ENCODE measurements at regions of chr9 and their contacts with region 1.

Region 1: DNA sequence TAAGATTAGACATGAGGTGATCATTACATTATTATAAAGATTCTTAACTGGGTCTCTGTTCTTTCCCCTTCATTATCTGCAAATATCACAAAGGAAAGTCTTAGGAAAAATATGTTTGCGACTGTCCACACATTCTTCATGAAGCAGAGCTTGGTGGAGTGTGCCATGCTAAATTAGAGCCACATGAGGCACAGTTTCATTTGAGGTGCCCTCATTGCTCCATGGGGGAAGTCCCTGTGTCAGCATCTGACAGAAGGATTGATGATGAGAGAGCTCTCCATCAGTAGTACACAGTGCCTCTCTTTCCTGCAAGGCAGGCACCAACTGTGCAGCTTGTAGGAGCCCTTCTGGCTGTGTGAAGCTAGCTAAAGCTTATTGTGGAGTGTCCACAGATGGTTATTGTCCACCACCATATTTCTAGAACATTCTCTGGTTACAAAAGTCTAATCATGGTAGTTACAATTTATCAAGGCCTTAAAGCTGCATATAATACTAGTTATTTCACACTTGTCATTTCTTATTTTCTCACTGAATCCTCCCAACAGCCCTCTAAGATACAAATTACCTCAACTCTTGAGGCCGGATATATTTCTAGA is 63.9 kb downstream of the C9orf152 start:
- DNase-seq: no peak
- ATAC-seq: peak; percentile 79
- H3K4me3 ChIP-seq: peak overlapping the region; percentile 37; the same call in 1 of the 2 replicates
- H3K27ac ChIP-seq: peak overlapping the region; percentile 81
- H3K4me1 ChIP-seq: peaks cover 61% of the 10 kb centered on the region
- H3K27me3 ChIP-seq: no peaks in the 10 kb centered on the region
- CTCF ChIP-seq: peak in 2 of 3 experiments; percentile 16 to 21; a peak in 1 of 6 replicates
- EP300 ChIP-seq: no peak
- POLR2A ChIP-seq: peak; percentile 48; the same call in 1 of the 2 replicates
- RAD21 ChIP-seq: no peak

Region 2: GRCh38 chr9:109705515-109705914 is 438.5 kb before region 1 on chr9:
- CTCF ChIA-PET with region 1: no interaction called
- POLR2A ChIA-PET with region 1: no interaction called
- RAD21 ChIA-PET with region 1: no interaction called
- SMC1A ChIA-PET with region 1: no interaction called
- in situ Hi-C with region 1: no loop called
- intact Hi-C with region 1: no loop called
- DNase-seq: no peak
- ATAC-seq: no peak
- H3K4me3 ChIP-seq: no peak overlapping the region
- H3K27ac ChIP-seq: no peak overlapping the region
- H3K4me1 ChIP-seq: no peaks in the 10 kb centered on the region
- H3K27me3 ChIP-seq: no peaks in the 10 kb centered on the region
- CTCF ChIP-seq: no peak
- EP300 ChIP-seq: no peak
- POLR2A ChIP-seq: no peak
- RAD21 ChIP-seq: no peak

Region 3: GRCh38 chr9:110048403-110048975 is 95.6 kb before region 1 on chr9:
- CTCF ChIA-PET with region 1: interaction called, 53 read pairs
- POLR2A ChIA-PET with region 1: interaction called, 33 read pairs
- RAD21 ChIA-PET with region 1: interaction called, 84 read pairs
- SMC1A ChIA-PET with region 1: interaction called, 78 read pairs
- in situ Hi-C with region 1: no loop called
- intact Hi-C with region 1: loop called (anchors 2 kb)
- DNase-seq: peak; percentile 56
- ATAC-seq: peak; percentile 90
- H3K4me3 ChIP-seq: peak overlapping the region; percentile 100
- H3K27ac ChIP-seq: peak overlapping the region; percentile 87
- H3K4me1 ChIP-seq: 0 out of 2 replicates have a peak, but pooled peaks cover 4% of the 10 kb centered on the region
- H3K27me3 ChIP-seq: no peaks in the 10 kb centered on the region; a peak in 1 of 4 replicates
- CTCF ChIP-seq: no peak
- EP300 ChIP-seq: no peak
- POLR2A ChIP-seq: peak; percentile 88
- RAD21 ChIP-seq: no peak

Region 4: DNA sequence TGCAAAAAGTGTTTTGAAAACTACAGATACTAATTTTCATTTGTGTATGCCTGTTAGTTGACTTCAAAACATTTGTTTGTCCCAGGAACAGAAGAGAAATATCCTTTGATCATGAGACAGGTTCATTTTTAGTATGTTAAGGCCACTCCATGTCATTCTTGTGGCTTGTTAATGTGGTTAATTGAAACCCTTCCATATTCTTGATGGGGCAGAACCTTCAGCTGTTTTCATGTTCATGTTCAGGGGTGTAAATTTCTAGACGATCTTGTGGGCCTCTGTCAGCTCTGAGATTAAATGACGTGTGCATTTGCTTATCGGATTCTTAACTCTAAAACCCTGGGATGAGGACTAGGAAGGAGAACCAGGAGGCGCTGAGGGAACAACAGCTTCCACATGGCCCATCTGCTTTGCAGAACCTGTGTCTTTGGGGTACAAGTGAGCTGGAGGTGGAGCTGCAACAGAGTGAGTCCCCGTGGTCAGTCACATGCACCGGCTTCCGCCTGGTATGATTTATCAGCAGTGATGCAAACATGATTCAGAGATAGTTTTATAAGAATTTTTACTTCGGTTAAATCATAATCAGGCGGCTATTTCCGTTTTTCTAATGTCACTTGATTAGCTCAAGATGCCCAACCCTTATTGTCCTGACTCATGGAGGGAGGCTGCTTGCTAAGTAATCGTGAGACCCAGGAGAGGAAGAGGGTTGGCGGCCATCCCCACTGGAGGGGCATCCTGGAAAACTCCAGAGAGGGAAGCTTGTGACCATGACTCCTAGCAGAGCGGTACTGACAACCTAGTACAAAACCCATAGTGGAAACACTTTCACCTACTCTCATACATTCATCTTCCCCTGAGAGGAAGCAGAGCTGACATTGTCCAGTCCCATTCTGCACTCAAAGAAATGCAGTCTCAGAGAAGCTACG is 74.5 kb before region 1 on chr9:
- CTCF ChIA-PET with region 1: interaction called, 237 read pairs
- POLR2A ChIA-PET with region 1: interaction called, 11 read pairs
- RAD21 ChIA-PET with region 1: interaction called, 8 read pairs
- SMC1A ChIA-PET with region 1: interaction called, 16 read pairs
- in situ Hi-C with region 1: no loop called
- intact Hi-C with region 1: no loop called
- DNase-seq: no peak
- ATAC-seq: no peak
- H3K4me3 ChIP-seq: no peak overlapping the region
- H3K27ac ChIP-seq: no peak overlapping the region
- H3K4me1 ChIP-seq: peaks cover 29% of the 10 kb centered on the region
- H3K27me3 ChIP-seq: no peaks in the 10 kb centered on the region
- CTCF ChIP-seq: no peak
- EP300 ChIP-seq: no peak
- POLR2A ChIP-seq: no peak
- RAD21 ChIP-seq: no peak

Region 5: DNA sequence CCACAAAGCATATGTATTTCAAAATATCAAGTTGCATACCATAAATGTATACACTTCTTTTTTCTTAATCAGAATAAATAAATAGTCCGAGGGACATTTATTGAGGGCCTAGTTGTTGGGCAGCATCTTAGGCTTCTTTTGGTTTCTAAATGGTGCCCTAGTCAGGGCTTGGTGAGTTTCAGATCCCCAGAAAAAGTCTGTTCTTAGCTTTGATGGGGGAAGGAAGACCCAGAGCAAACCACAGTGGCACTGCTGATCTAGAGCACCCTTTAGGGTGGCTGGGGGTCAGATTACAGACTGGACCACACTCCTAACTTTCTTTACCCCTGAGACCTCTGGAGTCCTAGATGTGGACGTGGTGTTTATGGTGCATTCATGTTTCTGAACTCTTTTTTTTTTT is 33.9 kb before region 1 on chr9:
- CTCF ChIA-PET with region 1: interaction called, 25 read pairs
- POLR2A ChIA-PET with region 1: interaction called, 18 read pairs
- RAD21 ChIA-PET with region 1: interaction called, 282 read pairs
- SMC1A ChIA-PET with region 1: interaction called, 122 read pairs
- in situ Hi-C with region 1: no loop called
- intact Hi-C with region 1: no loop called
- DNase-seq: peak; percentile 51
- ATAC-seq: peak; percentile 96
- H3K4me3 ChIP-seq: no peak overlapping the region
- H3K27ac ChIP-seq: no peak overlapping the region
- H3K4me1 ChIP-seq: peaks cover 27% of the 10 kb centered on the region
- H3K27me3 ChIP-seq: no peaks in the 10 kb centered on the region
- CTCF ChIP-seq: no peak
- EP300 ChIP-seq: no peak
- POLR2A ChIP-seq: no peak
- RAD21 ChIP-seq: no peak

Region 6: DNA sequence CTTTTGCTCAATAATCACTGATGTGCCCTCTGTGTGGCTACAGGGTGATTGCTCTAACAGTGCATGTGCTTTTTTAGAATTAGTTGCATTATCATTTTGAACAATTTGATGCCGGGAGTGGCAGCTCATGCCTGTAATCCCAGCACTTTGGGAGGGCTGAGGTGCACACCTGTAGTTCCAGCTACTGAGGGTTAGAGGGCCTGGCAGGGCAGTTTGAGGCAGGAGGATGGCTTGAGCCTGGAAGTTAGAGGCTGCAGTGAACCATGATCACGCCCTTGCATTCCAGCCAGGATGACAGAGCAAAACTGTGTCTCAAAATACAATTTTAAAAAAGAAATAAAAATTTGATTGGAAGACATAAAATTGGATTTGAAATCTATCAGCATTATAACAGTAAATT is 84.9 kb after region 1 on chr9:
- CTCF ChIA-PET with region 1: no interaction called
- POLR2A ChIA-PET with region 1: no interaction called
- RAD21 ChIA-PET with region 1: no interaction called
- SMC1A ChIA-PET with region 1: no interaction called
- in situ Hi-C with region 1: no loop called
- intact Hi-C with region 1: no loop called
- DNase-seq: no peak
- ATAC-seq: no peak
- H3K4me3 ChIP-seq: no peak overlapping the region
- H3K27ac ChIP-seq: no peak overlapping the region
- H3K4me1 ChIP-seq: no peaks in the 10 kb centered on the region
- H3K27me3 ChIP-seq: no peaks in the 10 kb centered on the region
- CTCF ChIP-seq: no peak
- EP300 ChIP-seq: no peak
- POLR2A ChIP-seq: no peak
- RAD21 ChIP-seq: no peak